GM12878 (cell line): ENCODE measurements at regions of chr9 and their contacts with region 1.

Region 1: DNA sequence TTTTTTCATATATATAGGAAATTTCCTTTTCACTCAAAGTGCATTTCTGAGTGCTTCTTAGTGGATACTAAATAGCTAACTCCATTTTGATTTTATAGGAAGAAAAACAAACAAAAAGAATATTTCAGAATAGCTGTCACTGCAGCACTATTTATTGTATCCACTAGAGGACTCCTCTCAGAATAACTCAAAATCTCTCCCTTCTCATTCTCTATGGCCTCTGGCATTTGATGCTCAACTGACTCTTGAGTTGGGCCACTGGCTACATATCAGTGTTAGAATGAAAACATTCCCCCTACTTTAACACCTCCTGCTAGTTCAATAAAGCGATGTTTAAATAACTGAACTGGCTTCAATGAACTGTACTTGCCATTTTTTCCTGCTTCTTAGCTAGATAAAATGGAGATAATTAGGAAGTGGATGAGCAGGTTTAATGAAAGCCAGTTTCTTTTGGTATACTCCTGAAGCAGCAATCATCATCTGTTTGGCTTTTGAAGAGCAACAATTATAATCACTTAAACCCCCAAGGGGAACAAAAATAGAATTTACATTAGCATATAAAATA is 16.6 kb upstream of the ELAVL2 start:
- DNase-seq: no peak
- ATAC-seq: peak; percentile 63
- H3K4me3 ChIP-seq: no peak overlapping the region
- H3K27ac ChIP-seq: no peak overlapping the region
- H3K4me1 ChIP-seq: no peaks in the 10 kb centered on the region
- H3K27me3 ChIP-seq: no peaks in the 10 kb centered on the region
- CTCF ChIP-seq: 0 out of 6 replicates have a peak, but pooled peaks of 1 of the 3 experiments have one; percentile 10
- EP300 ChIP-seq: no peak
- POLR2A ChIP-seq: no peak
- RAD21 ChIP-seq: no peak

Region 2: GRCh38 chr9:23477908-23478307 is 364.7 kb before region 1 on chr9:
- CTCF ChIA-PET with region 1: no interaction called
- POLR2A ChIA-PET with region 1: no interaction called
- RAD21 ChIA-PET with region 1: no interaction called
- SMC1A ChIA-PET with region 1: no interaction called
- in situ Hi-C with region 1: no loop called
- intact Hi-C with region 1: no loop called
- DNase-seq: no peak
- ATAC-seq: no peak
- H3K4me3 ChIP-seq: no peak overlapping the region
- H3K27ac ChIP-seq: no peak overlapping the region
- H3K4me1 ChIP-seq: no peaks in the 10 kb centered on the region
- H3K27me3 ChIP-seq: no peaks in the 10 kb centered on the region
- CTCF ChIP-seq: no peak
- EP300 ChIP-seq: no peak
- POLR2A ChIP-seq: no peak
- RAD21 ChIP-seq: no peak

Region 3: GRCh38 chr9:23826120-23826629 is 16.5 kb before region 1 on chr9 and contains the start of gene ELAVL2:
- CTCF ChIA-PET with region 1: interaction called, 4 read pairs
- POLR2A ChIA-PET with region 1: interaction called, 3 read pairs
- RAD21 ChIA-PET with region 1: interaction called, 9 read pairs
- SMC1A ChIA-PET with region 1: interaction called, 15 read pairs
- in situ Hi-C with region 1: no loop called
- intact Hi-C with region 1: no loop called
- DNase-seq: peak; percentile 26
- ATAC-seq: peak; percentile 85
- H3K4me3 ChIP-seq: no peak within 1 kb of the TSS
- H3K27ac ChIP-seq: no peak within 1 kb of the TSS
- H3K4me1 ChIP-seq: no peaks in the 10 kb centered on the region
- H3K27me3 ChIP-seq: no peaks in the 10 kb centered on the region
- CTCF ChIP-seq: no peak
- EP300 ChIP-seq: no peak
- POLR2A ChIP-seq: no peak
- RAD21 ChIP-seq: no peak
- polyA plus RNA-seq, gene ELAVL2: 0.24 to 0.72 TPM

Region 4: DNA sequence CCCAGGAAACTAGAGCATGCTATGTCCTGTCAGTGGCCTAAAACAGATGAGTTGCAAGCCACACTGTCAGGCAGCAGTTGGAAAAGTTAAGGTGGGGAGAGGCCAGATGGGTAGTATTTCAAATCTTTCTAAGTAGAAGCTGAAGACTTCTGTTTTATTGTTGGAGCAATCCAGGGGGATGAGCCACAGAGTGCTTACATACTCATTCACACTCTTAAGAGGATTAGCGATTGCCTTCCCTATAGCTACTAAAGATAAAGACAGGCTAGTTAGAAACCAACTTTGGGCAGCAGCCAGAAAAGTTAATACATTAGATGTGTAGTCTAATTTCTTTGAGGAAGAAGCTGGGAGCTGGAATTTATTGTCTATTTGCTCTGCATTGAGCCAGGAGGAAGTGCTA is 45.1 kb after region 1 on chr9:
- CTCF ChIA-PET with region 1: no interaction called
- POLR2A ChIA-PET with region 1: no interaction called
- RAD21 ChIA-PET with region 1: no interaction called
- SMC1A ChIA-PET with region 1: no interaction called
- in situ Hi-C with region 1: no loop called
- intact Hi-C with region 1: no loop called
- DNase-seq: no peak
- ATAC-seq: no peak
- H3K4me3 ChIP-seq: no peak overlapping the region
- H3K27ac ChIP-seq: no peak overlapping the region
- H3K4me1 ChIP-seq: no peaks in the 10 kb centered on the region
- H3K27me3 ChIP-seq: no peaks in the 10 kb centered on the region
- CTCF ChIP-seq: no peak
- EP300 ChIP-seq: no peak
- POLR2A ChIP-seq: no peak
- RAD21 ChIP-seq: no peak

Region 5: GRCh38 chr9:24041160-24041690 is 198.6 kb after region 1 on chr9:
- CTCF ChIA-PET with region 1: no interaction called
- POLR2A ChIA-PET with region 1: no interaction called
- RAD21 ChIA-PET with region 1: no interaction called
- SMC1A ChIA-PET with region 1: interaction called, 4 read pairs
- in situ Hi-C with region 1: no loop called
- intact Hi-C with region 1: loop called (anchors 5 kb)
- DNase-seq: no peak
- ATAC-seq: no peak
- H3K4me3 ChIP-seq: no peak overlapping the region
- H3K27ac ChIP-seq: no peak overlapping the region
- H3K4me1 ChIP-seq: no peaks in the 10 kb centered on the region
- H3K27me3 ChIP-seq: no peaks in the 10 kb centered on the region
- CTCF ChIP-seq: no peak
- EP300 ChIP-seq: no peak
- POLR2A ChIP-seq: no peak
- RAD21 ChIP-seq: no peak